ENCODE measurements at regions of chr10 and their contacts with region 1.

Region 1: DNA sequence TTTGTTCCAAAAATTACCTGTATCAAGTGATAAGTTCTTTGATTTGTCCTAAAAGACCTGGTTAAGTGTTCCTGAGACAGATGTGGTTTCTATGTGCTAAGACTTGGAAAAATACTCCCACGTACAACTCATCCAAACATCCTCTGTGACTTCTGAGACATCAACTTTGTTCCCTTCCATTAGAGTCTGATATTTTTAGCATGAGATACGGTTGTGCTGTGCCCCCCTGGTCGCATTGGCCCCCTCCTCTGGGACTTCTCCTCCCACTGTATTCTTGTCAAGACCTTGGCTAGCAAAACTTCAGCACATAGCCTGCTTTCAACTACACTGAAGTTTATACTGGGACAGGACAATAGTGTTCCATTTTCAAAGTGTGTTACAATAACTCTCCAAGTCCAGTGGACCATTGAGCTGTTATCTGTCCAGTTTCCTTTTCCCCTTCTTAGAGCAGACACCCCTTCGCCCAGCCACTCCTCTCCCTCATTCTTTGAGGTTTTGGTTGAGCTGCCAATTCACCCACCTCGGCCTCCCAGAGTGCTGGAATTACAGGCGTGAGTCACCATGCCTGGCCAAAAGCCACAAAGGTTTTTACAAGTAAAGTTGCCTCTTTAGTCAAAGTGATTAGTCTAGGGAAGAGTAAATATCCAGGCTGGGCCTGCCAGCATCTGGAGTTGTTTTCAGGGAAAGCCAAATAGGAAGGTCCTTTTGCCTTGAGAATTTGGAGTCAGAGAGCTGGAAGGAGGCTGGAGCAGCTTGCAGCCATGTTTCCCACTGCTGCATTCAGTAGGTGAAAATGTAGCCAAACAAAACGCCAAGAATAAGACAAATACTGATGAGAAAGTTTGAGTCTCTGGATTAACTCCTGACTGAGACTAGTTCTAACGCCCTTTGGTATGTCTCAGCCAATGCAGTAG is 17.8 kb upstream of the PDLIM1 start:
- DNase-seq: peak; percentile 90
- H3K4me3 ChIP-seq: no peak overlapping the region
- H3K27ac ChIP-seq: peak overlapping the region; percentile 55
- H3K4me1 ChIP-seq: peaks cover 15% of the 10 kb centered on the region
- H3K27me3 ChIP-seq: no peaks in the 10 kb centered on the region
- CTCF ChIP-seq: no peak
- POLR2A ChIP-seq: no peak

Region 2: GRCh38 chr10:95290461-95291364 is 17.9 kb before region 1 on chr10 and contains the start of gene PDLIM1:
- CTCF ChIA-PET with region 1: interaction called, 5 read pairs
- POLR2A ChIA-PET with region 1: no interaction called
- dilution Hi-C with region 1: no loop called
- intact Hi-C with region 1: loop called (anchors 2 kb)
- DNase-seq: peak; percentile 58
- H3K4me3 ChIP-seq: peak within 1 kb of the TSS; percentile 61 to 91 (median 70)
- H3K27ac ChIP-seq: peak within 1 kb of the TSS; percentile 44
- H3K4me1 ChIP-seq: peaks cover 35% of the 10 kb centered on the region
- H3K27me3 ChIP-seq: no peaks in the 10 kb centered on the region
- CTCF ChIP-seq: peak in 1 of 2 donors; percentile 30
- POLR2A ChIP-seq: peak; percentile 57
- total RNA-seq, gene PDLIM1: 70.4 and 122 TPM in 2 replicates

Region 3: GRCh38 chr10:95333997-95334804 is 25.6 kb after region 1 on chr10:
- CTCF ChIA-PET with region 1: no interaction called
- POLR2A ChIA-PET with region 1: no interaction called
- dilution Hi-C with region 1: no loop called
- intact Hi-C with region 1: loop called (anchors 1 kb)
- DNase-seq: peak; percentile 89
- H3K4me3 ChIP-seq: no peak overlapping the region
- H3K27ac ChIP-seq: peak overlapping the region; percentile 96
- H3K4me1 ChIP-seq: peaks cover 30% of the 10 kb centered on the region
- H3K27me3 ChIP-seq: no peaks in the 10 kb centered on the region
- CTCF ChIP-seq: no peak
- POLR2A ChIP-seq: peak; percentile 57